Common myeloid progenitor, CD34-positive (primary cell): ENCODE measurements at regions of chr22 and their contacts with region 1.

Region 1: DNA sequence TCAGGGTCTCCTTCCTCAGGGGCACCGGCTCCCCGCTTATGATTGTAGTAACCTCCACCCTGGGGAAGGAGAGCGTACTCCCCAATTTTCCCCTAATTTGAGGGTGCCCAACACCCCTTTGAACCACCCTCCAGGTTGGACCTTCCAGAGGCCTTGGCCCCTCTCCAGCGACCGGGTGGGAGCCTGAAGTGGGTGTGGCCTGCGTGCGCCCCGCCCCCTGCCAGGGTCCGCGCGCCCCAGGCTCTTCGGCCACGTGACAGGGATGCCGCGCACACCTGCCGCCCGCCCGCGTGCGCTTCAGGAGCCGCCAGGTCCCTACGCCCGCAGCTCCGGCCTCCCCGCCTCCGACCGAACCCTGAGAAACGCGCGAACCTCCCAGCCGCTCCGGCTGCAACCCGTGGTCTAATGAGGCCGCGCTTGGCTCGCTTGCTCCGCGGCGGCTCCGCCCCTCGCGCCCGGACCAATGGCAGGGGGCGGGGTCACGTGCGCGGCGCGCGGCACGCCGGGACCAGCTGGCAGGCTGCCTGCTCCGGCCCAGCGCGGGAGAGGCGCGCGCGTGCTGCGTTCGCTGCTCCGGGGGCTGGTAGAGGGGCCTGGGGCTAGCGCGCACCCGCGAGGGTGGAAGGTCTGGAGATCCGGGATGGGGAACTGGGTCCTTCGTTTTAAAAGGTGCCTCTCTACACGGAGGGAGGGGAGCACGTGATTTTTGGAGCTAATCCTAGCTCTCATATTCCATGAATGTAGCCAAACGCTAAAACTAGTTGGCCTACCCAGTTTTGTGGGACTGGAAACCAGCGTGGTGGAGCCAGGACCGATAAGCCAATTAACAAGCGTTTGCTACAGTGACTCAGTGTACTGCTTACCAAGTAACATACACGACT is at the start of gene FOXRED2:
- DNase-seq: peak; percentile 78 to 90 (median 89)
- H3K4me3 ChIP-seq: peak within 1 kb of the TSS; percentile 25 to 73 (median 62)
- H3K27ac ChIP-seq: no peak within 1 kb of the TSS
- H3K4me1 ChIP-seq: peaks cover 3 to 28% (median 17%) of the 10 kb centered on the region in 4 experiments
- H3K27me3 ChIP-seq: no peaks in the 10 kb centered on the region

Region 2: DNA sequence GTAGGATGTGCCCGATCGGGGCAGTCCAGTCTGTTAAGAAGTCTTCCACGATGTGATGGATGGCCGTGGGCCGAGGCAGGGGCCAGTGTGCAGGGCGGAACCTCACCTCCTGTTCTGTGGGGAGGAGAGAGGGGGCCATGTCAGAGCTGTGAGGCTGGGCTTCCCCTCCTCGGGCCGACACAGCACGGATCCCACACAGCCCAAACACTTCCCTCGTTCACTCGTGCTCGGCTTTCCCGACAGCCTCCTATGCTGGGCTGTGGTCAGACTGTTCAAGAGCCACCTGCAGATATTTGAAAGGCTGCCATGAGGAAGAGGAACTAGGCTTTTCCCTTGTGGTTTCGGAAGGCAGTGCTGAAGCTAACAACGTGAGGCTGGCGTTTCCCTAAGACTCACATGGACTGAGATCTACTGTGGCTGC is 13.2 kb before region 1 on chr22:
- CTCF ChIA-PET with region 1: interaction called, 15 read pairs
- POLR2A ChIA-PET with region 1: interaction called, 6 read pairs
- DNase-seq: peak; percentile 91 to 94 (median 94)
- H3K4me3 ChIP-seq: peak overlapping the region in 5 of 7 experiments; percentile 21 to 56 (median 44)
- H3K27ac ChIP-seq: no peak overlapping the region
- H3K4me1 ChIP-seq: peaks cover 4 to 30% (median 24%) of the 10 kb centered on the region in 4 experiments
- H3K27me3 ChIP-seq: no peaks in the 10 kb centered on the region

Region 3: GRCh38 chr22:36520423-36520822 is 13.5 kb after region 1 on chr22:
- CTCF ChIA-PET with region 1: interaction called, 11 read pairs
- POLR2A ChIA-PET with region 1: interaction called, 3 read pairs
- DNase-seq: no peak
- H3K4me3 ChIP-seq: no peak overlapping the region
- H3K27ac ChIP-seq: no peak overlapping the region
- H3K4me1 ChIP-seq: peaks cover 0 to 8% (median 2%) of the 10 kb centered on the region in 4 experiments
- H3K27me3 ChIP-seq: no peaks in the 10 kb centered on the region

Region 4: DNA sequence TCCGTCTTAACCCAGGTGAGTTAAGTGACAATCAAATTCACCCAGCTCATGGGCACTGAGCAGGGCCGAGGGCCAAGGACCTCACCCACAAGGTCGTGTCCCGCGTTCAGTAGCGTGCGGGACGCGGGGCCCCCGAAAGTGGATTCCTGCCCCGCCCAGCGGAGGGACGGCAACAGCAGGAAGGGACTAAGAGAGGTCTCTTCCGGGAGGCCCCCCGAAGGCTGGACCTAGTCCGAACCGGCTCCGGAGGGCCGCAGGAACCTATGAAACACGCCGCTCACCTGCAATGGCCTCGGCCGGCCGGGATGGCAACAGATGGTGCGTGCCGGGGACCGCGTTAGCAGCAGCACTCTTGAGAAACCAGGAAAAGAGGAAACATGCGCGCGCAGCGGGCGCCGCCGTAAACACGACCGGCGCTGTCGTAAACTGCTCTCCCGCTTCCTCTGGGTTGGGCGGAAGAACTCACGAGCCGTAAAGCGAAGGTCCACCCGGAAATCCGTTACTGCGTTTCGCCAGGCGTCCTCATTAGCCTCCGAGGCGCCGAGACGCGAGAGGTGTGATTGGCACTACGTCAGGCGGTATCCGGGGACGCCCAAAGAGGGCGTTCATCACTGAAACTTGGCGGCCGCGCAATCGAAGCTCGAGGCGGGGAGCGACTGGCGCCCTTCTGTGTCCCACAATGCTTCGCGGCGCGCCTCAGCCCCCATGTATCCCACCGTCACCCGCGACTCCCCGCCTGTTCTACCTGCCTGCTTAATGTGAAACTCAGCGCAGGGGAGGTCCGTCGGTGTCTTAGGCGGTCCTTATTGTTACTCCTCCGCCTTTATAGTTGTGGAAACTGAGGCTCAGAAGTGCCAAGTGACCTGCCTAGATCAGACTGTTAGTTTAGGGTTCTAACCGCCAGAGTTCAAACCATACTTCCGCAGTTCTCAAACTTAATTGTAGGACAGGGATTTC is 22.2 kb after region 1 on chr22 and contains the start of gene EIF3D:
- CTCF ChIA-PET with region 1: interaction called, 7 read pairs
- POLR2A ChIA-PET with region 1: interaction called, 10 read pairs
- DNase-seq: peak; percentile 100
- H3K4me3 ChIP-seq: peak within 1 kb of the TSS; percentile 66 to 100 (median 87)
- H3K27ac ChIP-seq: peak within 1 kb of the TSS; percentile 88 to 95
- H3K4me1 ChIP-seq: peaks cover 3 to 21% (median 18%) of the 10 kb centered on the region in 4 experiments
- H3K27me3 ChIP-seq: no peaks in the 10 kb centered on the region